ENCODE measurements at regions of chr2 and their contacts with region 1.

Region 1: DNA sequence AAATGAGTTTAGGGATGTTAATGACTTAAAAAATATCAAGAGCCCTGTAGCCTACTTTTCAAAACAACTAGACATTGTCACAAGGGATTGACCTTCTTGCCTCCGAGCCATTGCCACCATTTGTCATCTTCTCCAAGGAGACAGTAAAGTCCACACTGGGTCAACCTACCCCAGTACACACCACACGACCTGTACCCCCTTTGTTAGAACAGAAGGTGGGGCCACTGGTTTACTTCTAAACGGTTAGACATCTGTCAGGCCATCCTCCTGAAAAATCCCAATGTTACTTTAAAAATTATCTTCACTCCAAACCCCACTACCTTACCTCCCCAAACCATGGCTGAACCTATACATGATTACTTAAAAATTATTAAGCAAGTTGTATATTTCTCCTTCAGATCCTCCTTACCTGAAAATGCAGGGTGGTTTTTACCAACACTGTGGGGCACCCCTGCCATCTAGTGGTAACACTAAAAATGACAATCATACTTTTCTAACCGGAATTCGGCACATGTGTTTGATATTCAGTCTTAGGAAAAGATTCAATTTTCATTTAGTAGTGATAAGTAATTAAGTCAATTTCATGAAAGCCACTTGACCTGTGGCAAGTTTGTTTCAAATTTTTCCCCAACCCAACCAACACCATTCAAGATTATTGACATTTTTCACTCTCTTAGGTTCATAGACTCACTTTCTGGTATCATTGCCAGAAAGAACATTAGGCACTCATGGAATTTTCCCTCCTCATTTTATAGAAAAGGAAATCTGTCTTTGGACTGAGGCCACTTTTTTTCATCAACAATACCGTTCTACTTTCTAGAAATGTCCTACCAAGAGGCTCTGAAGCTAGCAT is 265.3 kb upstream of the PKDCC start:
- DNase-seq: peak; percentile 20
- H3K4me3 ChIP-seq: no peak overlapping the region
- H3K27ac ChIP-seq: no peak overlapping the region
- H3K4me1 ChIP-seq: no peaks in the 10 kb centered on the region
- H3K27me3 ChIP-seq: no peaks in the 10 kb centered on the region
- CTCF ChIP-seq: peak; percentile 71 to 82

Region 2: GRCh38 chr2:40824278-40824677 is 958.3 kb before region 1 on chr2:
- CTCF ChIA-PET with region 1: no interaction called
- dilution Hi-C with region 1: no loop called
- in situ Hi-C with region 1: no loop called
- intact Hi-C with region 1: no loop called
- DNase-seq: no peak
- H3K4me3 ChIP-seq: no peak overlapping the region
- H3K27ac ChIP-seq: no peak overlapping the region
- H3K4me1 ChIP-seq: no peaks in the 10 kb centered on the region
- H3K27me3 ChIP-seq: no peaks in the 10 kb centered on the region
- CTCF ChIP-seq: no peak

Region 3: GRCh38 chr2:40844353-40845277 is 937.9 kb before region 1 on chr2:
- CTCF ChIA-PET with region 1: no interaction called
- dilution Hi-C with region 1: no loop called
- in situ Hi-C with region 1: no loop called
- intact Hi-C with region 1: loop called (anchors 5 kb)
- DNase-seq: peak; percentile 30
- H3K4me3 ChIP-seq: no peak overlapping the region
- H3K27ac ChIP-seq: no peak overlapping the region
- H3K4me1 ChIP-seq: no peaks in the 10 kb centered on the region
- H3K27me3 ChIP-seq: no peaks in the 10 kb centered on the region
- CTCF ChIP-seq: peak; percentile 8 to 40

Region 4: GRCh38 chr2:41414486-41415230 is 367.9 kb before region 1 on chr2:
- CTCF ChIA-PET with region 1: interaction called, 3 read pairs
- dilution Hi-C with region 1: loop called (anchors 25 kb)
- in situ Hi-C with region 1: no loop called
- intact Hi-C with region 1: loop called (anchors 1 kb)
- DNase-seq: peak; percentile 40
- H3K4me3 ChIP-seq: no peak overlapping the region
- H3K27ac ChIP-seq: no peak overlapping the region
- H3K4me1 ChIP-seq: no peaks in the 10 kb centered on the region
- H3K27me3 ChIP-seq: no peaks in the 10 kb centered on the region
- CTCF ChIP-seq: peak; percentile 65 to 76

Region 5: GRCh38 chr2:41698678-41699422 is 83.7 kb before region 1 on chr2:
- CTCF ChIA-PET with region 1: no interaction called
- dilution Hi-C with region 1: no loop called
- in situ Hi-C with region 1: no loop called
- intact Hi-C with region 1: loop called (anchors 5 kb)
- DNase-seq: no peak
- H3K4me3 ChIP-seq: no peak overlapping the region
- H3K27ac ChIP-seq: no peak overlapping the region
- H3K4me1 ChIP-seq: no peaks in the 10 kb centered on the region
- H3K27me3 ChIP-seq: no peaks in the 10 kb centered on the region
- CTCF ChIP-seq: peak; percentile 51 to 80

Region 6: DNA sequence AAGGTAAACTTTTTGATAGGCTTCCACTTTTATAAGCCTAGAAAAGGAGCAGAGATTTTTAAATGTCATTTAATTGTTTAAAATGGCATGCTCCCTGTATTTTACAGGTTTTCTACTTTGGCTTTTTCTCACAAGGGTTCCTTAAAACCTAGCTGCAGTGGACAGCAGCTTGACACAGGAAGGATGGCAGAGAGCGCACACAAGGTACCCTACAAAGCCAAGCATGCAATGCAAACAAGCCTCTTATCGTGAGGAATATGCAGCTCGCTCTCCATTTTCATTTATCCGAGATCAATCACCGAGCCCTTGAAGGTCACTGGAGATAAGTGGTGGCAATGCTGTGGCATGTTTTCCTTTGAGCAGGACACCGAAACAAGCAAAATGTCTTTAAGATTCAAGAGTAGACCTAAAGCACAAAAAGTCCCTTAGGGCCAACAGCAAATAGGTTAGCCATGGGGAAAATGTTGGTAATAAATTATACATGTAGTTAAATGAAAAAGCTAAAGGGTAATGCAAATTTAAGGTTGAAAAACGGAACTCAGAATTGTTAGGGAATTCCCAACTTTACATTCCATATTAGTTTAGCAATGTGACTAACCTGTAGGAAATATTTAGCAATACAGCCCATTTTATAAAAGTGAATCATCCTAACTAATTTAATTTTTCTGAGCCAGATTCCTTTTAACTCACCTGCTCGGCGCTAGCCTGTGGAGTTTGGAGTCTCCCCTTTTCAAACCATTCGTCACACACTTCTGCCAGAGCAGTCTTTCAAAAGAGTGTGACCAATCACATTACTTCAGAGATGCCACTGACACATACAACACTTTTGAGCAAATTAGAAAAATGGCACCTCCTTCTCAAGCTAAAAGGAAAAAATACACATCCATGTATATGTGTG is 72.6 kb before region 1 on chr2:
- CTCF ChIA-PET with region 1: no interaction called
- dilution Hi-C with region 1: no loop called
- in situ Hi-C with region 1: no loop called
- intact Hi-C with region 1: no loop called
- DNase-seq: peak; percentile 87
- H3K4me3 ChIP-seq: no peak overlapping the region
- H3K27ac ChIP-seq: peak overlapping the region; percentile 46
- H3K4me1 ChIP-seq: peaks cover 22% of the 10 kb centered on the region
- H3K27me3 ChIP-seq: no peaks in the 10 kb centered on the region
- CTCF ChIP-seq: no peak

Region 7: DNA sequence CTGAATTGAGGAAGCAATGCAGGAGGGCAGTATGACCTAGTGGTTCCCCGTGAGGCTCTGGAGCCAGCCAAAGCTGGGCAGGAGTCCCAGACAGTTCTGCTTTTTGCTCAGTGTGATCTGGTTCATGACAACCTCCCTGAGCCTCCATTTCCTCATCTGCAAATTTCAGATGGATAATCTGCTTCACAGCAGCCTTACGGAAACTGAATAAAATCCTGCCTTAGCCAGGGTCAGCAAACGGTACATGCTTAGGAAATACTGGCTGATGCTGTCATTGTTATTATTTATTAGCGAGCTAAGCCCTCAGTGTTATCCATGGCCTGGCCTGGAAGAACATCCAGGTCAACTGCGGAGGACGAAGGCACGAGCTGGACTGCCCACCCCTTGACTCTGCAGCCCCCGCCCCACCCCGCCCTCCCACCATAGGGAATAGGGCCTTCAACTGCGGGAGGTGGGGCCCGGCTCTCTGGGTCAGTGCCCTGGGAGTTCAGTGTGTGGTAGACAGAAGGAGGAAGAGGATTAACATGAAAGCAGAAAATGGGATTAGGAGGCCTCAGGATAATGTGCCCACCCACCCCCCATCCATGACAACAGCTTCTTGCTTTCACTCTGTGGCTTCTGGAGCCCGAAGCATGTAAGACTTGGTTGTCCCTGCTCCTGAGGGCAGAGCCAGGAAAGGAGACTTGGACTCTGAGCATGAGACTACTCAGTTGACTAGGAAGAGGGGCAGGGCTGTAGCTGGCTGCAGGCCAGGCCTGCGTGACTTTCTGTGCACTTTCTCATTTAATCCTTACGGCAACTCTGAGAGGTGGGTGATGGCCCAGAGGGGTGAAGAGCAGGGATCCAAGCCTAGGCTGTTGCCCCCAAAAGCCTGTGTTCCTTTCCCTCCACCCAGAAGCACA is 278.4 kb after region 1 on chr2:
- CTCF ChIA-PET with region 1: no interaction called
- dilution Hi-C with region 1: no loop called
- in situ Hi-C with region 1: no loop called
- intact Hi-C with region 1: no loop called
- DNase-seq: no peak
- H3K4me3 ChIP-seq: no peak overlapping the region
- H3K27ac ChIP-seq: no peak overlapping the region
- H3K4me1 ChIP-seq: no peaks in the 10 kb centered on the region
- H3K27me3 ChIP-seq: no peaks in the 10 kb centered on the region
- CTCF ChIP-seq: no peak